Caco-2 (cell line): ENCODE measurements at regions of chr9 and their contacts with region 1.

Region 1: GRCh38 chr9:5832543-5833529 is at the start of gene ERMP1:
- DNase-seq: peak; percentile 79 to 90
- H3K4me3 ChIP-seq: peak within 1 kb of the TSS; percentile 74
- H3K4me3 Mint-ChIP-seq: peak within 1 kb of the TSS; percentile 77
- H3K27ac Mint-ChIP-seq: peak within 1 kb of the TSS; percentile 91
- H3K4me1 ChIP-seq: peaks cover 7% of the 10 kb centered on the region
- H3K4me1 Mint-ChIP-seq: peaks cover 23% of the 10 kb centered on the region
- H3K27me3 ChIP-seq: no peaks in the 10 kb centered on the region
- H3K27me3 Mint-ChIP-seq: no peaks in the 10 kb centered on the region
- CTCF ChIP-seq: peak; percentile 65 to 76
- total RNA-seq, gene ERMP1: 31.1 and 34.7 TPM in 2 replicates

Region 2: GRCh38 chr9:5557606-5558587 is 274.9 kb before region 1 on chr9:
- CTCF ChIA-PET with region 1: no interaction called
- POLR2A ChIA-PET with region 1: no interaction called
- intact Hi-C with region 1: no loop called
- DNase-seq: no peak
- H3K4me3 ChIP-seq: no peak overlapping the region
- H3K4me3 Mint-ChIP-seq: no peak overlapping the region
- H3K27ac Mint-ChIP-seq: no peak overlapping the region
- H3K4me1 ChIP-seq: no peaks in the 10 kb centered on the region
- H3K4me1 Mint-ChIP-seq: no peaks in the 10 kb centered on the region
- H3K27me3 ChIP-seq: no peaks in the 10 kb centered on the region
- H3K27me3 Mint-ChIP-seq: peaks cover 8% of the 10 kb centered on the region
- CTCF ChIP-seq: no peak

Region 3: GRCh38 chr9:5762421-5762820 is 70.4 kb before region 1 on chr9:
- CTCF ChIA-PET with region 1: no interaction called
- POLR2A ChIA-PET with region 1: no interaction called
- intact Hi-C with region 1: no loop called
- DNase-seq: no peak
- H3K4me3 ChIP-seq: no peak overlapping the region
- H3K4me3 Mint-ChIP-seq: no peak overlapping the region
- H3K27ac Mint-ChIP-seq: no peak overlapping the region
- H3K4me1 ChIP-seq: no peaks in the 10 kb centered on the region
- H3K4me1 Mint-ChIP-seq: no peaks in the 10 kb centered on the region
- H3K27me3 ChIP-seq: no peaks in the 10 kb centered on the region
- H3K27me3 Mint-ChIP-seq: no peaks in the 10 kb centered on the region
- CTCF ChIP-seq: no peak

Region 4: DNA sequence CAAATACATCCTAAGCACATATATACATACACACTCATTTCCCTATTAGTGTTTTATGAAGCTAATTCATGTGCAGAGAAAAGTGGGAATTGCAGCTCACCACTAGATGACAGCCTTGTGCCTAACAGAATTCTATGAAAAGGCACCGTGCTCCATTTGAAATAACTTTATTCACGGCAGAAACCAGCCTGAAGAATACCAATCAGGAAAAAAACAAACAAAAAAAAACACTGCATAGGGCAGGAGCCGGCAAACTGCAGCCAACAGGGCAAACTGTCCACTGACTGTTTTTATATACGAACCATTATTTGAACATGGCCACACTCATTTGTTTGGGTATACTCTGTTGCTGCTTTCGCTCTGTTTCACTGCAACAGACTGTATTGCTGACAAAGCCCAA is 33.5 kb before region 1 on chr9:
- CTCF ChIA-PET with region 1: interaction called, 10 read pairs
- POLR2A ChIA-PET with region 1: interaction called, 6 read pairs
- intact Hi-C with region 1: loop called (anchors 1 kb)
- DNase-seq: peak in 1 of 2 experiments; percentile 33
- H3K4me3 ChIP-seq: no peak overlapping the region
- H3K4me3 Mint-ChIP-seq: no peak overlapping the region
- H3K27ac Mint-ChIP-seq: no peak overlapping the region
- H3K4me1 ChIP-seq: peaks cover 22% of the 10 kb centered on the region
- H3K4me1 Mint-ChIP-seq: peaks cover 9% of the 10 kb centered on the region
- H3K27me3 ChIP-seq: no peaks in the 10 kb centered on the region
- H3K27me3 Mint-ChIP-seq: no peaks in the 10 kb centered on the region
- CTCF ChIP-seq: peak; percentile 53 to 70

Region 5: GRCh38 chr9:5817869-5818268 is 15.0 kb before region 1 on chr9:
- CTCF ChIA-PET with region 1: interaction called, 7 read pairs
- POLR2A ChIA-PET with region 1: interaction called, 7 read pairs
- intact Hi-C with region 1: loop called (anchors 2 kb)
- DNase-seq: peak in 1 of 2 experiments; percentile 47
- H3K4me3 ChIP-seq: no peak overlapping the region
- H3K4me3 Mint-ChIP-seq: peak overlapping the region; percentile 12
- H3K27ac Mint-ChIP-seq: peak overlapping the region; percentile 87
- H3K4me1 ChIP-seq: peaks cover 18% of the 10 kb centered on the region
- H3K4me1 Mint-ChIP-seq: peaks cover 11% of the 10 kb centered on the region
- H3K27me3 ChIP-seq: no peaks in the 10 kb centered on the region
- H3K27me3 Mint-ChIP-seq: no peaks in the 10 kb centered on the region
- CTCF ChIP-seq: no peak

Region 6: GRCh38 chr9:5939530-5939929 is 106.7 kb after region 1 on chr9:
- CTCF ChIA-PET with region 1: no interaction called
- POLR2A ChIA-PET with region 1: no interaction called
- intact Hi-C with region 1: no loop called
- DNase-seq: no peak
- H3K4me3 ChIP-seq: no peak overlapping the region
- H3K4me3 Mint-ChIP-seq: no peak overlapping the region
- H3K27ac Mint-ChIP-seq: no peak overlapping the region
- H3K4me1 ChIP-seq: no peaks in the 10 kb centered on the region
- H3K4me1 Mint-ChIP-seq: no peaks in the 10 kb centered on the region
- H3K27me3 ChIP-seq: no peaks in the 10 kb centered on the region
- H3K27me3 Mint-ChIP-seq: no peaks in the 10 kb centered on the region
- CTCF ChIP-seq: no peak